Colonic mucosa (tissue), 4 donors: ENCODE measurements at regions of chr5 and their contacts with region 1.

Region 1: DNA sequence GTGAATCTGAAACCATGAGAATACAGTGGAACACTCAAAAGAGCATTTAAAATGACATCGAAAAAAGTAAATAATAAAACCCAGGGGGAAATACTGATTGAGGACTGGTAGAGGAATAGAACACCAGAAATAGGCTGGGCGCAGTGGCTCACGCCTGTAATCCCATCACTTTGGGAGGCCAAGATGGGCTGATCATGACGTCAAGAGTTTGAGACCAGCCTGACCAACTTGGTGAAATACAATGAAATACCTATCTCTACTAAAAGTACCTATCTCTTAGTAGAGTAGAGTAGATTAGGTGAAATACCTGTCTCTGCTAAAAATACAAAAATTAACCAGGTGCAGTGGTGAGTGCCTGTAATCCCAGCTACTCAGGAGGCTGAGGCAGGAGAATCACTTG is 1490.8 kb downstream of the MAT2B start:
- DNase-seq: no peak
- H3K4me3 ChIP-seq: no peak overlapping the region
- H3K27ac ChIP-seq: no peak overlapping the region
- H3K4me1 ChIP-seq: no peaks in the 10 kb centered on the region
- H3K27me3 ChIP-seq: no peaks in the 10 kb centered on the region
- CTCF ChIP-seq: no peak

Region 2: DNA sequence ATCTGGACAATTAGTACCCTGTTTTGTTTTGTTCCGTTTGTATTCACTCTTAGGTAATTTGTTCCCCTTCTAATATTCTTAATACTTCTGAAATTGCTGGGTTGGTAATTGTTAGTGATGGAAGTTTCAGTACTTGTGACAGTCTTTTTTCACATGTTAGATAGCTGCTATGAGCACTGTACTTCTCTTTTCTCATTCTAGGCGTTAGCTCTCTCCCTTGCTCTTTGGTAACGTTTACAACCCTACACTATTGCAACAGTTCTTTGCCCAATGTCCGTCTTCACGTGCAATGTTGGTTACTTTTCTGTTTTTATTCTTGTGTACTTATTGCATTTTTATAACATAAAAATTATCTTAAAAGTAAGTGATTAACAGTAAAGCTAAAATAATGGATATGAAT is 18.2 kb after region 1 on chr5:
- intact Hi-C with region 1: loop called (anchors 2 kb)
- DNase-seq: no peak
- H3K4me3 ChIP-seq: no peak overlapping the region
- H3K27ac ChIP-seq: no peak overlapping the region
- H3K4me1 ChIP-seq: no peaks in the 10 kb centered on the region
- H3K27me3 ChIP-seq: no peaks in the 10 kb centered on the region
- CTCF ChIP-seq: no peak